ENCODE measurements at regions of chr22 and their contacts with region 1.

Region 1: GRCh38 chr22:50507991-50508884 is at the start of gene NCAPH2:
- DNase-seq: peak; percentile 99
- total RNA-seq, gene NCAPH2: 32.1 to 32.7 TPM

Region 2: GRCh38 chr22:50250555-50251476 is 257.4 kb before region 1 on chr22 and contains the start of gene HDAC10:
- intact Hi-C with region 1: loop called in 1 of 2 experiments (anchors 10 kb)
- DNase-seq: peak; percentile 95
- total RNA-seq, gene HDAC10: 14.1 to 23.6 TPM

Region 3: DNA sequence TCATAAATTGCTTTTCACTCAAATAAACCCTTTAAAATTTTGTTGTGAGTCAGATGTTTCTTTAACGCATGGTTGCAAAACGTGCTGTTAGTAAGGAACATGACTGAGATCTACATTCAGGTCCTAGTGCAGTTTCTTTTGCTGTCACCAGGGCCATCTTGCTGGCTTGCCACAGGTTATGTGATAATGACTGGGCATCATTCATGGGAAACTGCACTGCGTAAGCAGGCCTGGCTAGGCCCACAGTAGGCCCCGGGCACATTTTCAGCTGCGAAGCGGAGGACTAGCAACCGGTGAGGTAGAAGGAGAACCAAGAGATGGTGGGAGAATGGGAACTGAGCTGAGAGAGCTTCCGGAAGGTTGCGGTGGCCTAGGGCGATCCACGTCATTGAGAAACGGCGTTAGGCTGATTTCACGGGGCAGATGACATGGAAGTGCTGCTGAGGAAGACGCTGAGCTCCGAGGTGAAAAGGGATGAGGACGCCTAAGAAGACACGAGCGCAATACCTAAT is 34.2 kb after region 1 on chr22:
- intact Hi-C with region 1: no loop called
- DNase-seq: peak; percentile 87